AG04450 (cell line): ENCODE measurements at regions of chr15 and their contacts with region 1.

Region 1: DNA sequence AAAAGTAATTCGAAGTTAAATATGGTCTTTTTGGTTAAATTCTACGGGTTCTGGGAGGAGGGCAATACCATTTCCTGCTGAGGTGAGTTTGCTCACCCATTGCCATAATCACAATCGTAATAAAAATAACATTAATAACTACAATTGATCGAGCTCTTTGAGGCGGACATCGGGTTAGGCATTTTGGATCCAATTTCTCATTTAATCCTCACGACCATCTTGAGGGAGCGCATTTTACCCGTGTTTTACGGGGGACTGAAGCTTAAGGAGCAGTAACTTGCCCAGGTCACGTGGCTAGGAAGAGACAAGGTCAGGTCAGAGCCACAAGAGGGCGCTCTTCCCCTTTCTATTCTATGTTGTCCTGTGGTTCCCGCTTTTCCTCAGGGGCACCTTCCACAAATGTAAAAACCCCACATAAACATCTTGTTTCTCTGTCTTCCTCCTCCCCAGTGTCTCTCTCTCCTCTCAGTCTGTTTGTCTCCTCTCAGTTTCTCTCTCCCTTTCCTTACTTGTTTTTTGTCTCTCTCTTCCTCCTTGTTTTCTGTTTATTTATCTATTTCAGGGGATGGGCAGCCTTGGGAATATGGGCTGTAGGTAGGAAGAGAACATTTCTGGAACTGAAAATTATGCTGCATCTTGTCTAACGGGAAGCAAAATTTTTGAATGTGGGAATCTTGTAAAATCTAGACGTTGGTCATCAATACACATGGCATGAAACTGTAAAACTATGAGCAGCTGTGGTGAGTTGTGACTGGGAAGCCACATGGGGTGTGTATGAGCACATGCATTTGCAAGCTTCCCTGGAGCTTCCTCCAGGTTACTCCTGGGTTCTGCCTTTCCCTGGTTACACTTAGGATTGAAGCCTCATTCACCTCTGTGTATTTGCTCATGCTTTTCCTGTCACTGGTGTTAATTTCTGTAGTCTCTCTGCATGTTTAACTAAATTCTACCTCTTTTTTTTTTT is 71.0 kb downstream of the SQOR start:
- DNase-seq: peak; percentile 66
- H3K4me3 ChIP-seq: peak overlapping the region; percentile 50
- H3K27ac ChIP-seq: no peak overlapping the region
- H3K27me3 ChIP-seq: no peaks in the 10 kb centered on the region
- CTCF ChIP-seq: peak; percentile 88

Region 2: GRCh38 chr15:45573961-45574629 is 131.7 kb before region 1 on chr15:
- CTCF ChIA-PET with region 1: no interaction called
- POLR2A ChIA-PET with region 1: no interaction called
- DNase-seq: no peak
- H3K4me3 ChIP-seq: no peak overlapping the region
- H3K27ac ChIP-seq: no peak overlapping the region
- H3K27me3 ChIP-seq: peaks cover 6% of the 10 kb centered on the region
- CTCF ChIP-seq: peak; percentile 32

Region 3: GRCh38 chr15:45611305-45611704 is 94.5 kb before region 1 on chr15:
- CTCF ChIA-PET with region 1: interaction called, 11 read pairs
- POLR2A ChIA-PET with region 1: no interaction called
- DNase-seq: no peak
- H3K4me3 ChIP-seq: no peak overlapping the region
- H3K27ac ChIP-seq: no peak overlapping the region
- H3K27me3 ChIP-seq: no peaks in the 10 kb centered on the region
- CTCF ChIP-seq: peak; percentile 52

Region 4: DNA sequence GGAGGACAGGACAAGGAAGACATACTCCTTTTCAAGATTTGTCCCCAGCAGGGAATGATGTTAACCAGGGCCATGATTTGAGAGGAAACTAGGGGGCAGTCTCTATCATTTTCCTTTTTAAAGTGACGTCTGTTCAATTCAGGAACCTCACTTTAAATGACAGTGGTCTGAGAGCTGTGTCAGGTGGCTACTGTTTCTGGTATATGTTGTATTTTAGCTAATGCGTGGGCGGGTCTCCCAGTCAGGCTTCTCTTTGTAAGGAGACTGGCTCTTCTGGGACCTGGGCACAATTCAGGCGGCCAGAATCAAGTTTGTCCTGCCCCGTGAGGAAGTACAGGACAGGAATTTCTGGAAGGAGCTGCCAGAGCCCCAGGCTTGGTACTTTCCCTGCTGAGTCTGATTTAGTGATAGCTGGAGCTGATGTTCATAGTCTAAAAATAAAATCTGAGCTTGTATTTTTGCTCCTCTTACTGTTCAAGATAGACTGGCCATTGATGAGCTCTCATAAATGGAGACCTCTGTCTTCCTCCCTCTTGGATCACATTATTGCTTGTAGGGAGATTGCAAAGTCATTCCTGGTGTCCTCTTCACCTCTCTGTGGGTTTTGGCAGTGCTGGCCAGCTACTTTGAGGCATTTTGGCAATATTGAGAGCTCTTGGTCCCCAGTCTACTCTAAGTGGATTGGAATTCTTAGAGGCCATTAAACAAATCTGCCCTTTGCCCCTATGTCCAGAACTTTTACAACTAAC is 45.4 kb before region 1 on chr15:
- CTCF ChIA-PET with region 1: interaction called, 13 read pairs
- POLR2A ChIA-PET with region 1: interaction called, 4 read pairs
- DNase-seq: no peak
- H3K4me3 ChIP-seq: no peak overlapping the region
- H3K27ac ChIP-seq: no peak overlapping the region
- H3K27me3 ChIP-seq: no peaks in the 10 kb centered on the region
- CTCF ChIP-seq: no peak

Region 5: DNA sequence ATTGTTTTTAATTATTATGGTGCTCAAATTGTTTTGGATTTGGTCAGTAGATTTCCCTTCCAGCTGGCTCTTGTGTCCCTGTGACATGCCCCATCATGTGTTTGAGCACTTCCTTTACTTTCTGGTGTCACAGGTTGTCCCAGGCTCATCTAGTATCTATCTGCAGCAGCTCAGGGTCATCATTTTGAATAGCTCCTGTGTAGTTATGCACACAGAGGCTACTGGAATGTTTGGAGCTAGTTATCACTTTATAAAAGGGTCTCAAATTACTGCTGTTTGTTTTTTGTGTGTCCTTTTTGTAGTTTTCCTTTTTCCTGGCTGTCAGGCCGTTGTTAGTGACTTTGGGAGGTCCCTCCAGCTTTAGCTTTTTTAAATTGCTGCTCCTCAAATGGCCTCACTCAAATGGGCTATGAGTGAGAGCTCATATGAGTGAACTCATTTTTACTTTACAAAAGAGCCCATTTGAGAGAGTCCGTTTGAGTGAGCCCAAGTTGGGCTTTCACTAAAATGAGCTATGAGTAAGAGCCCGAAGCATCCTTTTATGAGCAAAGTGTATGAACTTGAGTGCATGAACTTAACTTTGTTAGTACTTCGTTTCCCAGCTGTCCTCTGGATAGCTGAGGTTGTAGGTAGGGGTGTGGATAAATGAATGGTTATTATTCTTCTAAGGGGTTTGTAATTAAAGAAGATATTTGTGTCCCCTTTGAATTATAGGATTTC is 27.2 kb before region 1 on chr15:
- CTCF ChIA-PET with region 1: interaction called, 66 read pairs
- POLR2A ChIA-PET with region 1: no interaction called
- DNase-seq: no peak
- H3K4me3 ChIP-seq: no peak overlapping the region
- H3K27ac ChIP-seq: no peak overlapping the region
- H3K27me3 ChIP-seq: no peaks in the 10 kb centered on the region
- CTCF ChIP-seq: no peak

Region 6: DNA sequence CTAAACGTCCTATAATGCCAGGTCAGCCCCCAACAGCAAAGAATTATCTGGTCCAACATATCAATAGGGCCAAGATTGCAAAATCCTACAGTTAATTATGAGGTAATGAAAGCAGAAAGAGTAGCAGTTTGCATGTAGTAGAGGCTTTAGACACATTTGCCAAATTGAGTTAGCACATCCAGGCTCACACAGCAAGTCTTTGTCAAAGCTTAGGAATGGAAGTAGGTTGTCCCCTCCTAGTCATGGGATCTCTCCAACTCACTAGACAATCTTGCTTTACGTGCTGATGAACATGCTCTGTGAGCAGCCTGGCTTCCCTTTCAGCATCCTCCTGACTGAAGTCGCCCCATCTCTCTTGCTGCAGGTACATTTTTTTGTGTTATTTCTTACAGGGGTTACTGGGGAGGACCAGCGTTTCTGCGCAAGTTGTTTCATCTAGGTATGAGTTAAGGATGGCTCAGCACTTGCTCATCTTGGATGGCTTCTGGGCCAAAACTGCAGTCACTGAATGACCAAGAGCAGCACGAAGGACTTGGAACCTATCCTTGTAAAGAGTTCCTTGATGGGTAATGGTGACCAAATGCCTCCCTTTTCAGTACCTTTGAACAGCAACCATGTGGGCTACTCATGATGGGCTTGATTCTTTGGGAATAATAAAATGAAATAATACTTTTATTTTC is 15.1 kb before region 1 on chr15:
- CTCF ChIA-PET with region 1: interaction called, 29 read pairs
- POLR2A ChIA-PET with region 1: interaction called, 3 read pairs
- DNase-seq: no peak
- H3K4me3 ChIP-seq: no peak overlapping the region
- H3K27ac ChIP-seq: no peak overlapping the region
- H3K27me3 ChIP-seq: no peaks in the 10 kb centered on the region
- CTCF ChIP-seq: no peak

Region 7: GRCh38 chr15:45790325-45790943 is 84.6 kb after region 1 on chr15:
- CTCF ChIA-PET with region 1: interaction called, 50 read pairs
- POLR2A ChIA-PET with region 1: interaction called, 4 read pairs
- DNase-seq: no peak
- H3K4me3 ChIP-seq: no peak overlapping the region
- H3K27ac ChIP-seq: no peak overlapping the region
- H3K27me3 ChIP-seq: no peaks in the 10 kb centered on the region
- CTCF ChIP-seq: peak; percentile 59